GM13977 (cell line): ENCODE measurements at regions of chr1 and their contacts with region 1.

Region 1: DNA sequence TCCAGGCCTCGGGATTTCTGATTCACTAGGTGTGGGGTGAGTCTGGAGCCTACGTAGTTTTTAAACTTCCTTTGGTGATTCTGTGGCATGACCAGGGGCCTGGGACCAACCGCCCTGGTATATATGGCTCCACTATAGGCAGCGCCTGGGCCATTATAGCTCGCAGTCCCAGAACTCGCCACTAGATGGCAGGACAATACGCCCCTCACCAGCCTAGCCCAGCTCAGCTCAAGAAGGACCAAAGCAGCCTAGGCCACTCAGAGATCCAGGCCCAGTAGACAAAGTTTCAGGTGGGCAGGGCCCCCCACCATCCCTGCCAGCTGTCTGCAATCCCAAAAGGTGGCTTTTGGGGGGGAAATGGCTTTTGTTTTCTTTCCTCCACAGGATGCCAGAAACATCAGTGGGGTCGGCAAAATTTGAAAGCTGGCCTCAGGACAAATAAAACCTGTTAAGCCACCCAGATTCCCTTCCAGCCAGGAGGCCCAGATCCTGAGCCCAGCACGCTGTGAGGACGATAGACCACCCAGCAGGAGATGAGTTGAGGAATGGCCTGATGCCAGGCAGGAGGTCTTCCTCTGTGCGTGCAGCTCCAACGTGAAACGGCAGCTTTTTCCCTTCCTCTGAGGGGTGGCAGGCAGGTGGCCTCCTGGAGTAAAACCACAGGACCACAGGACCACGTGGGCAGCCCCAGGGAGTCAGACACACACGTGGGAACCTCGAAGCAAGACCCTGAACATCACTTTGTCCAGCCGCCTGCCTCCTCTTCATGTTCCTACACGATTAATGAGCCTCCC is 24.8 kb upstream of the TMEM51 start:
- DNase-seq: peak; percentile 88
- CTCF ChIP-seq: peak; percentile 90

Region 2: GRCh38 chr1:15290382-15290781 is 161.7 kb after region 1 on chr1:
- in situ Hi-C with region 1: loop called (anchors 10 kb)
- DNase-seq: no peak
- CTCF ChIP-seq: no peak

Region 3: GRCh38 chr1:15409388-15410222 is 280.9 kb after region 1 on chr1 and contains the start of gene EFHD2:
- in situ Hi-C with region 1: loop called (anchors 25 kb)
- DNase-seq: peak; percentile 96
- CTCF ChIP-seq: no peak